OCI-LY7 (cell line): ENCODE measurements at regions of chr1 and their contacts with region 1.

Region 1: DNA sequence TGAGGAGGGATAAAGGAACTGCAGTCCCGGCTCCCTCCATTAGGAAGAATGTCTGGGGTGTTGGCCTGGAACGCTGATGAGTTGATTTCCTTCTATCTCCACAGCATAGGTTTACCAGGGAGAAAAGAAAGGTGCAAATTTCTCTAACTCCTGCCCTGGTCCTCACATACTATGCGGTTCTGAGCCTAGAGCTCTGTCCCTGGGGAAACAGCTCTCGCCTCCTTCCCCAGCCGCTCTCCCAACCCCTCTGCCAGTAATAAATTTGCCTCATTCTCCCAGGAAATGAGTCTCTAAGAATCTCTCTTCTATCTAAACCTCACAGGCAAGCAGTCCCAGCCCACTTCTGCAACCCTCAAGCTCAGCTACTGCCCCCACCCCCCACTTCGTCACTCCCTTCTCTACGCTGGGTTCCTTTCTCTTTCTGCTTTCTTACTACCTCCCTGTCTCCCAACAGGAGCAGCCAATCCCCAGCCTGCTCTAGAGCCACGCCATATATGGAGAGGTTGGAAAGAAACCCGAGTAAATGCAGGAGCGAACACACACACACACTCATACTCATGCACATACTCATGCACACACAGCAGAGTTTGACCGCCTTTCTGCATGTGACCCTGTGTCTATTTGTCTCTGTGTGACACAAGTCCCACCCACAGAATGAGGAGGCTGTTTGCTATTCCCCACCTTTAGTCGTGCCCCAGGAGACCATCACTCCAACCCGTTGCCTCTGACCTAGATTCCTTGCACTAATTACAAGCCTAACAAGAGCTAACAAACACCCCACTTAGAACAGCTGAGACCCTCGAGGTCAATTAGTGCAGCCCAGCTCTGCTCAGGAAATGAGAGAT is 13.4 kb downstream of the PLEKHO1 start:
- DNase-seq: peak; percentile 49
- H3K4me3 ChIP-seq: peak overlapping the region; percentile 44
- H3K27ac ChIP-seq: peak overlapping the region; percentile 99
- H3K4me1 ChIP-seq: peaks cover 81% of the 10 kb centered on the region
- CTCF ChIP-seq: no peak

Region 2: DNA sequence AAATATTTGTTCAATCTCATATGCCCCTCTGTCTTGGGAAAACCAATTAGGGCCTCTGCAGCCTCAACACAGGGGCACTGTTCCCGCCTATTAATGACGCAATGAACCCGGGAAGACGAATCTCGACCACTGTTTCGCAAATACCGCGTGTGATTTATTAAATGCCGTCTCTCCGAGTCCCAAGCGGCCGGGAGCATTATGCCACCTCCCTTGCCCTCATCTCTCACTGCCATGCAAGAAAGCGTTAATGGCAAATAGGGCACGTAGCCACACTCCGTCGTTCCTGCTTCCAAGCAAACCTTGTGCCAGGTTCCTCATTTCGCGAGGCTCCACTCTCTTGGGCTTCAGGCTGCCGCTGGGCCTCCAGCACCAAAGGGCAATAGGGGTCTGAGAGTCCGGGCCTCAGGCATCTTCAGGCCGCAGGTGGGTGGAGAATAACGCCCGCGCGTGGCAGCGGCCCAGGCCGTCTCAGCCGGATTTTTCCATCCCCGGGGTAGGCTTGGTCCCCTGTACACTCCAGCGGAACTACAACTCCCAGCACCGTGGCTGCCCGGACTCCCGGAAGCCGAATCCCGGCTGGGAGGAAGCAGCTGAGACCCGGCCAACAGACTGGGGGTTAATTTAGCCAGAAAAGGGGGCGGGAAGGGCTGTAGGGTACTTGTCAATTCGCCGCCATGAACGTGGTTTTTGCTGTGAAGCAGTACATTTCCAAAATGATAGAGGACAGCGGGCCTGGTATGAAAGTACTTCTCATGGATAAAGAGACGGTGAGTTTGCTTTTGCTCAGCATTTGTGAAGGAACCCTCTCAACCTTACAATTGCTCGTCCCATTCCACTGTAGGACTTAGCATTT is 95.7 kb before region 1 on chr1 and contains the start of gene VPS45:
- CTCF ChIA-PET with region 1: interaction called, 3 read pairs
- POLR2A ChIA-PET with region 1: interaction called, 7 read pairs
- intact Hi-C with region 1: loop called (anchors 2 kb)
- DNase-seq: peak; percentile 93
- H3K4me3 ChIP-seq: peak within 1 kb of the TSS; percentile 81
- H3K27ac ChIP-seq: peak within 1 kb of the TSS; percentile 90
- H3K4me1 ChIP-seq: peaks cover 25% of the 10 kb centered on the region
- CTCF ChIP-seq: no peak
- total RNA-seq, gene VPS45: 38.9 and 40.2 TPM in 2 replicates

Region 3: GRCh38 chr1:150072959-150073358 is 90.1 kb before region 1 on chr1:
- CTCF ChIA-PET with region 1: interaction called, 7 read pairs
- POLR2A ChIA-PET with region 1: interaction called, 7 read pairs
- intact Hi-C with region 1: loop called (anchors 1 kb)
- DNase-seq: peak; percentile 46
- H3K4me3 ChIP-seq: no peak overlapping the region
- H3K27ac ChIP-seq: no peak overlapping the region
- H3K4me1 ChIP-seq: peaks cover 14% of the 10 kb centered on the region
- CTCF ChIP-seq: peak; percentile 86

Region 4: GRCh38 chr1:150149271-150150132 is 13.6 kb before region 1 on chr1 and contains the start of gene PLEKHO1:
- CTCF ChIA-PET with region 1: no interaction called
- POLR2A ChIA-PET with region 1: interaction called, 38 read pairs
- intact Hi-C with region 1: loop called (anchors 1 kb)
- DNase-seq: peak; percentile 77
- H3K4me3 ChIP-seq: peak within 1 kb of the TSS; percentile 99
- H3K27ac ChIP-seq: peak within 1 kb of the TSS; percentile 90
- H3K4me1 ChIP-seq: peaks cover 56% of the 10 kb centered on the region
- CTCF ChIP-seq: no peak
- total RNA-seq, gene PLEKHO1: 122 and 127 TPM in 2 replicates

Region 5: DNA sequence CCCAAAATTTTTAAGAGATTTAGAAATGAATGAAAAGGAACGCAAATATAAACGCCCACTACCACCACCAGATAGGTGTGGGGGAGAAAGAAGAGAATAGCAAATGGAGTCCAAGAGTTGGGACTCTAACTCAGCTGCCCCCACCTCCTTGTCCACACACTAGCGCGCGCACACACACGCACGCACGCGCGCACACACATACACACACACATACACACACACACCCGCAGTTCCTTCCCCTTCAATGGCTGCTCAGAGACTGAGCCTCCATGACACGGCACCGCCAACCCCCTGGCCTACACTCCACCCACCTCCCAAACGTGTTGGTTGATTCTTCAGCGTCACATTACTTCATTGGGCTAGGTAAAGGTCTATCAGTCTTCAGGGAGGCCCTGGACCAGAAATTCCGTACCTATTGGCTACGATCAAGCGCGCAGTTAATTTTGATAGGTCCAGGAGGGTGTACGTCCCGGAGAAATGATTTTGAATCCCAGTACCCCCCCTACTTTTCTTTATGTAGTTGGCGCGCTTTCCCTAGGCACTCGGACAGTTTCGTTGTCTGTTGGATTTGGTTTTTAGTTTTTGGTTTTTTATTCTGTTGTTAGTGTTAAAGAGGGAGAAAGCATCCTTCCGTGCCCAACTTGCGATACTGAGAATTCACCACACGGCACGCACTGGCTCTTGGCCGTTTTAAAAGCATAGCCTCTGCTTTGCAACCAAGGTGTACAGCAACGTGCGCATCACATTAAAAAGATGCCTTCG is 72.9 kb after region 1 on chr1 and contains the start of gene ANP32E:
- CTCF ChIA-PET with region 1: no interaction called
- POLR2A ChIA-PET with region 1: interaction called, 3 read pairs
- intact Hi-C with region 1: loop called (anchors 2 kb)
- DNase-seq: peak; percentile 99
- H3K4me3 ChIP-seq: peak within 1 kb of the TSS; percentile 96
- H3K27ac ChIP-seq: peak within 1 kb of the TSS; percentile 95
- H3K4me1 ChIP-seq: peaks cover 21% of the 10 kb centered on the region
- CTCF ChIP-seq: peak; percentile 67
- total RNA-seq, gene ANP32E: 52.8 and 73.5 TPM in 2 replicates

Region 6: DNA sequence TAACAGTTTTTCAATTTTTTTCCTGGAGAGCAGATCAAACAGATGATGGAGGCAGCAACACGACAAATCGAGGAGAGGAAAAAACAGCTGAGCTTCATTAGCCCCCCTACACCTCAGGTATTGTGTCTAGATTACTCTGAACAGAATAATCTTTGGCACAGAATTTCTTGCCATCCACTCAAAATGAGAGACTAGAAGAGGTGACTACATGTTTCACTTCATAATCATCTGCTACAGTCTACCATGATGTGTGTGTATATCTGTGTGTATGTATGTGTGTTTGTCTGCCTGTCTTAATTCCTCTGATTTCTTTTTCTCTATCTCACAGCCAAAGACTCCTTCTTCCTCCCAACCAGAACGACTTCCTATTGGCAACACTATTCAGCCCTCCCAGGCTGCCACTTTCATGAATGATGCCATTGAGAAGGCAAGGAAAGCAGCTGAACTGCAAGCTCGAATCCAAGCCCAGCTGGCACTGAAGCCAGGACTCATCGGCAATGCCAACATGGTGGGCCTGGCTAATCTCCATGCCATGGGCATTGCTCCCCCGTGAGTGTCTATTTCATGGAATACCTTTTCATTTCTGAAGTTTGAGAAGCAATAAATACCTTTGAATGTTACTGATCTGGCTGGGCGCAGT is 169.7 kb after region 1 on chr1:
- CTCF ChIA-PET with region 1: no interaction called
- POLR2A ChIA-PET with region 1: no interaction called
- intact Hi-C with region 1: no loop called
- DNase-seq: no peak
- H3K4me3 ChIP-seq: no peak overlapping the region
- H3K27ac ChIP-seq: no peak overlapping the region
- H3K4me1 ChIP-seq: no peaks in the 10 kb centered on the region
- CTCF ChIP-seq: no peak

Region 7: DNA sequence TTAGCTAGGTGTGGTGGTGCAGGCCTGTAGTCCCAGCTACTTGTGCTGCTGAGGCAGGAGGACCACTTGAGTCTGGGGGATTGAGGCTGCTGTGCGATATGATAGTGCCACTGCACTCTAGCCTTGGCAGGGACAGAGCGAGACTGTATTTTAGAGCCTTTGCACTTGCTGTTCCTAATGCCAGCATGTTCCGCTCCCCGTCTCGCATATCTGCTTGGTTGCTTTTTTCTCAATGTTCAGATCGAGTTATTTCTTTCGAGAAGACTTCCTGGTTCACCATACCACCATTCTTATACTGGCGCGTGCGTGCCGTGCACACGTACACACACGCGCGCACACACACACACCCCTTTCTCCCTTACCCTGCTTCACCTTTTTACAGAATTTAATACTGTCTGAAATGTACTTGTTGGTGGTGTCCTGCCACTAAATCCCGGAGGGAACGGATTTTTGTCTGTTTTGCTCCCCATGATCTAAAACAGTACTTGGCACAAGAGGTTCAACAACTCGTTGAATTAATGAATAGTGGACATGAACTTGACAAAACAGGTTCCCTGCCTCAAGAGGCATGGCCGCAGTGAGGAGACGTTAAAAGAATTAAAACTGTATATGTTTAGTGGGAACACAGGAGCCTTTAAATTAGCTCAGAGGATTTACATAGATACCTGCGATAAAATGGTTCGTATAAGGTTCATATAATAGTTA is 199.8 kb after region 1 on chr1:
- CTCF ChIA-PET with region 1: no interaction called
- POLR2A ChIA-PET with region 1: no interaction called
- intact Hi-C with region 1: no loop called
- DNase-seq: no peak
- H3K4me3 ChIP-seq: peak overlapping the region; percentile 92
- H3K27ac ChIP-seq: peak overlapping the region; percentile 93
- H3K4me1 ChIP-seq: peaks cover 11% of the 10 kb centered on the region
- CTCF ChIP-seq: no peak

Region 8: GRCh38 chr1:150529017-150529416 is 365.9 kb after region 1 on chr1:
- CTCF ChIA-PET with region 1: no interaction called
- POLR2A ChIA-PET with region 1: no interaction called
- intact Hi-C with region 1: no loop called
- DNase-seq: no peak
- H3K4me3 ChIP-seq: no peak overlapping the region
- H3K27ac ChIP-seq: no peak overlapping the region
- H3K4me1 ChIP-seq: no peaks in the 10 kb centered on the region
- CTCF ChIP-seq: no peak